WTC11 (cell line): ENCODE measurements at regions of chr15 and their contacts with region 1.

Region 1: DNA sequence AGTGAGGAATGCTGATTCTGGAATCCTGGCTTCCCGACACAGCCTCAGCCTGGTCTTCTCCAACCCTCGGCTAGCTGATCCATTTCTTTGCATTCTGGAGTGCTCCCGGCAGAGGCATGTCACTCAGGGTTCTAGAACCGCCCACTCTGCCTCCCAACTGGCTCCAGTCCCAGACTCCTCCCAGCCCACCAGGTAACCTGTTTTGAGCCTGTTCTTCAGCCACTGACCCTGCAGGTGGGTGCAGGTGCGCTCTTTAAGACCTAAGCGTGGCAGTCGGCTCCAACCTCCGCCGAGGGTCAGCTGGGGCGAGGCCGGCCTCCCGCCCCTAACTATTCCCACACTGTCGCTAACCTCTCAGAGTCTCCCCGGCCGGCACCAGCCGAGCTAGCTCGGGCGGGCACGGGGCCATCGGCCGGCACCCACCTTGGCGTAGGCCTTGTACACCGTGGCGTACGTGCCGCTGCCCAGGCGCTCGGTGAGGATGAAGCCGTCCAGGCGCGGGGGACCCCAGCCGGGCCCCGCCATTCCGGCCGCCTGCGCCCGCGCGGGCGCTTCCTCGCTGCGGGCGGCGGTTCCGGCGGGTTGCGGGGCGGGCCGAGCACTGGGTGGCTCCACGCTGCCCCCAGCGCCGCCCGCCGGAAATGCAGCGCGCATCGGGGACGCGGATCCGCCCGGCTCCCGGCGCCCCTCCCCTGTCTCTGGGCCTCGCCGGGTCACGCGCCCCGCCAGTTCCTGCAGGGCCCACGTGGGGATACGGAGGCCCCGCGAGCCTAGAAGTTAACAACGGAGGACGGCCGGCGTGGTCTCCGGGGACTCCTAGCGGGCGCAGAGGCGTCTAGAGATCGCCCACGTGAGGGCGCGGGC is at the start of gene ULK3:
- DNase-seq: peak; percentile 87
- ATAC-seq: peak; percentile 87
- H3K4me3 Mint-ChIP-seq: peak within 1 kb of the TSS; percentile 87
- H3K27ac Mint-ChIP-seq: peak within 1 kb of the TSS; percentile 91
- H3K4me1 Mint-ChIP-seq: peaks cover 21% of the 10 kb centered on the region
- H3K27me3 Mint-ChIP-seq: no peaks in the 10 kb centered on the region
- CTCF ChIP-seq: peak; percentile 76
- total RNA-seq, gene ULK3: 34.4 to 38.9 TPM (median 37.4 TPM) in 3 replicates

Region 2: DNA sequence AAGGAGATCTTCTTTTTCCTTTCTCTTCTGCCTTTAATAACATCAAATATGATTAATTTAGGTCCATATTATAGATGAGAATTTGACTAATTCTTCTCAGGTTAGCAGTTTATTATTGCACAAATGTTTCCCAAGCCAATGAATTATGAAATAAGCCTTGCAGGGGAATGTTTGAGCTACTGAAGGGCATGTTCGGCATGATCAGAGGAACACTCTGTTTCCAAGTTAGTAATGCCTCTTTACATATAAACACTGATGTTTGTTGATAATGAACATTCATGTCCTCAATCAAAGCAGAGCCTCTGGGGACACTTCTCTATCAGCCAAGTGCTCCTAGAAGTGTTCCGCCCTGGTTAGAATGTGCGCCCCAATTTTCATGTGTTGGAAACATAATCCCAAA is 107.5 kb before region 1 on chr15:
- CTCF ChIA-PET with region 1: no interaction called
- POLR2A ChIA-PET with region 1: no interaction called
- DNase-seq: no peak
- ATAC-seq: no peak
- H3K4me3 Mint-ChIP-seq: no peak overlapping the region
- H3K27ac Mint-ChIP-seq: no peak overlapping the region
- H3K4me1 Mint-ChIP-seq: no peaks in the 10 kb centered on the region
- H3K27me3 Mint-ChIP-seq: peaks cover 80% of the 10 kb centered on the region
- CTCF ChIP-seq: no peak

Region 3: DNA sequence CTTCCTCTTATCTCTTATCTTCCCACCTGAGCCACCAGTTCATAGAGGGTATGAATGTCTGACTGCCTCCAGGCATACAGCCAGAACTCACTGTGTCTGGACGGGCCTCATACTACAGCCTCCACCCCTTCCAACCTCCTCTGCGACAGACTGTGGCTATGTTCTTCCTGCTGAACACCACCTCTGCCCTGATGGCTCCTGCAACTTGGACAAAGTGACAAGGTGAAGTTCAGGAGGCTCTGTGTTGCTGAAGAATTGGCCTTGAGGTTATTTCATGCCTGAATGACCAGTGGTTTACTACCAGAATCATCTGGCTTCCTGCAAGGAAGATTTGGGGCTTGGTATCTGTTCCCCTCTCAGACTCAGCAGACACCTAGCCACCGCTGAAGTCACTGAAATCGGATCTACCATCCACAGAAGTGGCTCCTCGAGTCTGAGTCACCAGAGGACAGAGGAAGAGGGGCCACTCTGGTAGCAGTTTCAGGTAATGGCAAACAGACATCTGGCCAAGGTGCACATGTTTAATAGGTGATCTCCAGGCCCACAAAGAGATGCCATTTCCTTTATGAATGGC is 14.4 kb after region 1 on chr15:
- CTCF ChIA-PET with region 1: interaction called, 17 read pairs
- POLR2A ChIA-PET with region 1: interaction called, 4 read pairs
- DNase-seq: no peak
- ATAC-seq: no peak
- H3K4me3 Mint-ChIP-seq: no peak overlapping the region
- H3K27ac Mint-ChIP-seq: no peak overlapping the region; the same call in 1 of the 2 replicates
- H3K4me1 Mint-ChIP-seq: no peaks in the 10 kb centered on the region
- H3K27me3 Mint-ChIP-seq: no peaks in the 10 kb centered on the region
- CTCF ChIP-seq: no peak